WTC11 (cell line): ENCODE measurements at regions of chr22 and their contacts with region 1.

Region 1: GRCh38 chr22:37676736-37677492 is 1.5 kb downstream of the LGALS1 start:
- DNase-seq: peak; percentile 86
- ATAC-seq: peak; percentile 74
- H3K4me3 Mint-ChIP-seq: peak overlapping the region; percentile 72
- H3K27ac Mint-ChIP-seq: peak overlapping the region; percentile 84
- H3K4me1 Mint-ChIP-seq: peaks cover 13% of the 10 kb centered on the region
- H3K27me3 Mint-ChIP-seq: peaks cover 18% of the 10 kb centered on the region
- CTCF ChIP-seq: no peak

Region 2: GRCh38 chr22:37658133-37659065 is 18.5 kb before region 1 on chr22 and contains the start of gene PDXP:
- CTCF ChIA-PET with region 1: interaction called, 59 read pairs
- POLR2A ChIA-PET with region 1: interaction called, 5 read pairs
- DNase-seq: peak; percentile 98
- ATAC-seq: peak; percentile 96
- H3K4me3 Mint-ChIP-seq: peak within 1 kb of the TSS; percentile 82
- H3K27ac Mint-ChIP-seq: peak within 1 kb of the TSS; percentile 97
- H3K4me1 Mint-ChIP-seq: peaks cover 29% of the 10 kb centered on the region
- H3K27me3 Mint-ChIP-seq: no peaks in the 10 kb centered on the region
- CTCF ChIP-seq: no peak
- total RNA-seq, gene PDXP: 36.1 to 42.5 TPM (median 42.3 TPM) in 3 replicates

Region 3: GRCh38 chr22:37664249-37665101 is 12.4 kb before region 1 on chr22:
- CTCF ChIA-PET with region 1: interaction called, 59 read pairs
- POLR2A ChIA-PET with region 1: interaction called, 7 read pairs
- DNase-seq: no peak
- ATAC-seq: no peak
- H3K4me3 Mint-ChIP-seq: no peak overlapping the region
- H3K27ac Mint-ChIP-seq: no peak overlapping the region
- H3K4me1 Mint-ChIP-seq: peaks cover 27% of the 10 kb centered on the region
- H3K27me3 Mint-ChIP-seq: no peaks in the 10 kb centered on the region
- CTCF ChIP-seq: no peak